AG04450 (cell line): ENCODE measurements at regions of chr4 and their contacts with region 1.

Region 1: DNA sequence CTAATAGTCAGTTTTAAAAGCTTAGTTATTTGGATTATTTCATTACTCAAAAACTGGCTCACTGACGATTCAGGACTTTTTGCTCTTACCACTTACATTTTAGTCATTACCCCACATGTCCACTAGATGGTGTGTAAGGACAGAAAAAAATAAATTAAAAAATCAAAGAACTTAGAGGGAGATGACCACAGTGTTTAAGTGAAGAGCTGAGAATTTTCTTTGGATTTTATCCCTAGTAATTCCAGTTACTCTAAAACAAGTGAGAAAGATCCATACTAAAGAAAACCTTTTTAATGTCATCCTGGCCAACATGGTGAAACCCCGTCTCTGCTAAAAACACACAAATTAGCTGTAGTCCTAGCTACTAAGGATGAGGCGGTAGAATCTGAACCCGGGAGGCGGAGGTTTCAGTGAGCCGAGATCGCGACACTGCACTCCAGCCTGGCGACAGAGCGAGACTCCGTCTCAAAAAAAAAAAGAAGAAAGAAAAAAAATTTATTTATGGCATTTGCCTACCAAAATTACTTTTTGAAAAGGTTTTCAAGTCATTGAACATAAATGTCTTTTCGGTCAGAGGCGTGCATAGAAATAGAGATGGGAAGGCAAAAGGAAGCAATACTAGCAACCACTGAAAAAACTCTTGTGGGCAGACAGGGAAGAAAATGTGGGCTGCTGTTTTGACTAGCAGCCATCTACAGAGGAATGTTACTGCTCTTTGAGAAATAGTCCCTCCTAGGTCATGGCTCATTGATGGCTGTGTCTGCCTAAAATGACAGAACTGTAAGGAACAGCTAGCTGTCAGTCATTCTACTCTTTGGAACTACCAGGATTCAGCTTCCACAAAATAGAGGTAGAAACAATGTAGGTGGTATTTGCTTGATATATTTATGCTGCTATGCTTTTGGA is 26.6 kb upstream of the TMPRSS11B start:
- DNase-seq: peak; percentile 30
- H3K4me3 ChIP-seq: peak overlapping the region; percentile 49
- H3K27ac ChIP-seq: no peak overlapping the region
- H3K27me3 ChIP-seq: no peaks in the 10 kb centered on the region
- CTCF ChIP-seq: peak; percentile 73

Region 2: DNA sequence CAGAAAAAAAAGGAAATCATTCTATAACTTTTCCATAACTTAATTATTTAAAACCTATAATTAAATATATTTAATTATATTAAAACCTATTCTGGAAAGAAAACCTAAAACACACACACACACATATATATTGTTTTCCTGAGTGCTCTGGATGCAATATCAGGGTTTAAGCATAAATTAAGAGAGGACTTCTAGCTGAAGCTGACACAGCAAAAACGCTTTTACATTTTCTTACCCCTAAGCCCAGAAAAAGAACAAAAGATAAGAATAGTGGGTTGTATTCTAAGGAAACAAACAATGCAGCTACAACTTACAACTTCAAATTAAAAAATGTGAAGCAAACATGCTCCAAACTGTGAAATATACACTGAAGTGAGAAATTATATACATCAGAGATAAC is 78.9 kb before region 1 on chr4:
- CTCF ChIA-PET with region 1: no interaction called
- POLR2A ChIA-PET with region 1: no interaction called
- DNase-seq: no peak
- H3K4me3 ChIP-seq: no peak overlapping the region
- H3K27ac ChIP-seq: no peak overlapping the region
- H3K27me3 ChIP-seq: no peaks in the 10 kb centered on the region
- CTCF ChIP-seq: no peak

Region 3: DNA sequence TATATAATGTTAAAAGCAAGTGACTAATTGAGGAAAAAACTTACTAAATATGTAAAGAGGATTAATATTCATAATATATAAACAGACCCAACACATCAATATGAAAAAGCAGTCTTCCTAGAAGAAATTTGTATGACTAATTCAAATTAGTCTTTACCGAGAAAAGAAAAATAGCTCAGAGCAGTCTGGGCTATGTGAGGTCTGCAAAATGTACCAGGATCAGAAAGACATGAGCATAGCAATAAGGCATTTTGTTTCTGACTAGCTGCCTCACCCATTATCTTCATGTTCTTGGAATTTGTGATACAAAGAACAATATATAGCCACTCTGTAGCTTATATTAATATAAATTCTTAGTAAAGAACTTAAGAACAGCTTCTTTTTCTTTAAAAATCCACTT is 12.9 kb before region 1 on chr4:
- CTCF ChIA-PET with region 1: interaction called, 16 read pairs
- POLR2A ChIA-PET with region 1: no interaction called
- DNase-seq: no peak
- H3K4me3 ChIP-seq: no peak overlapping the region
- H3K27ac ChIP-seq: no peak overlapping the region
- H3K27me3 ChIP-seq: peaks cover 5% of the 10 kb centered on the region
- CTCF ChIP-seq: no peak

Region 4: DNA sequence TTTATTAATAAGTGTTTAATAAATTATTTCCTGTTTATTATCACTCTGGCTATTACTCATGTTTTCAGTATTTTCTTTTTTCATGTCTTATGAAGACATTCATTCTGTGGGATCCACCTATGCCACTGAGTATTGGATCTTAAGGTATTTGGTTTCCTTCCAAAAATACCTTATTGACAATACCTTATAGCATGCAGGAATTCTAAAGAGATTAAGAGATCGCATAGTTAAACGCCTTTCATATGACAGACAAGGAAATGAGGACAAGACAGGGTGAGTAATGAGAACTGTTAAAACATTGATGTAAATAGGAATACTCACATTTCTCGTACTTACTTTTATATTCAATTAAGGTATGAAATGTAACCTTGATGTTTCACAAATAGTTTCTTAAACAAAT is 11.6 kb after region 1 on chr4:
- CTCF ChIA-PET with region 1: interaction called, 11 read pairs
- POLR2A ChIA-PET with region 1: no interaction called
- DNase-seq: no peak
- H3K4me3 ChIP-seq: no peak overlapping the region
- H3K27ac ChIP-seq: no peak overlapping the region
- H3K27me3 ChIP-seq: no peaks in the 10 kb centered on the region
- CTCF ChIP-seq: no peak